Activated CD4-positive, alpha-beta T cell treated with anti-CD3 and anti-CD28 coated beads for 36 hours (primary cell): ENCODE measurements at regions of chr5 and their contacts with region 1.

Region 1: DNA sequence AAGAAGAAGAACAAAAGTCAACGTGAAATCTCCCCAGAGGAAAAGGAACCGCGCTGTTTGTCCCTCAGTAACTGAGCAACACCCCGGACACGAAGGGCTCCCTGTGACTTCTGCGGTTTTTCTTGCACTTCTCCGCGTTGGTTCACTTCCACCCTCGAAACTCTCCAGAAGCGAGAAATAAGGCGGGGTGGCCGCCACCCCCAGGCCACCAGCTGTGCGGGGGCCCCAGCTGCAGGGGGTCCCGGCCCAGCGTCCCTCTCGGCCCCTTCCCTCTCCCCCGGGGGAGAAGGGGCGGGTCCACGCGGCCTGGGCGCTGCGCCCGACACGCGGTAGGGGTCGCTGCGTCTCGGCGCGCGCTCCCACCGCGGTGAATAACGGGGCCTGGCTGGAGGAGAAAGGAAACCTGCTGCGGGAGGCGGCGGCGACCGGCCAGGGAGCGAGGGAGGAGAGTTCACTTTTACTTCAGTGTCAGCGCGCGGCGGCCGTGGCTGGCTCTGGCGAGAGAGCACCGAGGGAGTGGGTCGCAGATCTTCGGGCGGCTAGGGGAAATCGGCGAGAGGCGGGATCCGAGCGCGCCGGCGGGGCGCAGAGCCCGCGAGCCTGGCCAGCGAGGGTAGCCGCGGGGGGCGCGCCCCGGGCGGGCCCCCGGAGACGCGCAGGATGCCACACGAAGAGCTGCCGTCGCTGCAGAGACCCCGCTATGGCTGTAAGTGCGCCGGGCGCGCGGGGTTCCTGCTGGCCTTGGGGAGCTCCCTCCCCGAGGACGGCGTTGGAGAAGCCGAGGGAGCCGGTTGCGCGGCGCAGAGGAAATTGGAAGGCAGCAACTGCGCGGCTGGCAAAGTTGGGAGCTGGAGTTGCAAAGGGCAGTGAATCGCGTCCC is at the start of gene IQGAP2:
- DNase-seq: peak; percentile 88
- ATAC-seq: peak; percentile 62
- H3K4me3 Mint-ChIP-seq: peak within 1 kb of the TSS; percentile 93
- H3K27ac Mint-ChIP-seq: peak within 1 kb of the TSS; percentile 100
- H3K4me1 Mint-ChIP-seq: peaks cover 56% of the 10 kb centered on the region
- H3K27me3 Mint-ChIP-seq: peaks cover 4% of the 10 kb centered on the region
- total RNA-seq, gene IQGAP2: 62.7 to 82.7 TPM

Region 2: GRCh38 chr5:76269932-76270610 is 133.1 kb before region 1 on chr5:
- CTCF ChIA-PET with region 1: no interaction called
- POLR2A ChIA-PET with region 1: interaction called, 3 read pairs
- intact Hi-C with region 1: loop called (anchors 1 to 2 kb)
- DNase-seq: peak; percentile 67
- ATAC-seq: peak; percentile 78
- H3K4me3 Mint-ChIP-seq: peak overlapping the region; percentile 52
- H3K27ac Mint-ChIP-seq: peak overlapping the region; percentile 96
- H3K4me1 Mint-ChIP-seq: peaks cover 40% of the 10 kb centered on the region
- H3K27me3 Mint-ChIP-seq: peaks cover 7% of the 10 kb centered on the region

Region 3: GRCh38 chr5:76367623-76368371 is 35.3 kb before region 1 on chr5:
- CTCF ChIA-PET with region 1: no interaction called
- POLR2A ChIA-PET with region 1: no interaction called
- intact Hi-C with region 1: loop called (anchors 1 kb)
- DNase-seq: peak; percentile 57
- ATAC-seq: peak; percentile 97
- H3K4me3 Mint-ChIP-seq: no peak overlapping the region
- H3K27ac Mint-ChIP-seq: peak overlapping the region; percentile 85
- H3K4me1 Mint-ChIP-seq: peaks cover 32% of the 10 kb centered on the region
- H3K27me3 Mint-ChIP-seq: no peaks in the 10 kb centered on the region

Region 4: GRCh38 chr5:76433261-76433660 is 30.1 kb after region 1 on chr5:
- CTCF ChIA-PET with region 1: no interaction called
- POLR2A ChIA-PET with region 1: no interaction called
- intact Hi-C with region 1: no loop called
- DNase-seq: no peak
- ATAC-seq: no peak
- H3K4me3 Mint-ChIP-seq: no peak overlapping the region
- H3K27ac Mint-ChIP-seq: no peak overlapping the region
- H3K4me1 Mint-ChIP-seq: peaks cover 12% of the 10 kb centered on the region
- H3K27me3 Mint-ChIP-seq: no peaks in the 10 kb centered on the region

Region 5: DNA sequence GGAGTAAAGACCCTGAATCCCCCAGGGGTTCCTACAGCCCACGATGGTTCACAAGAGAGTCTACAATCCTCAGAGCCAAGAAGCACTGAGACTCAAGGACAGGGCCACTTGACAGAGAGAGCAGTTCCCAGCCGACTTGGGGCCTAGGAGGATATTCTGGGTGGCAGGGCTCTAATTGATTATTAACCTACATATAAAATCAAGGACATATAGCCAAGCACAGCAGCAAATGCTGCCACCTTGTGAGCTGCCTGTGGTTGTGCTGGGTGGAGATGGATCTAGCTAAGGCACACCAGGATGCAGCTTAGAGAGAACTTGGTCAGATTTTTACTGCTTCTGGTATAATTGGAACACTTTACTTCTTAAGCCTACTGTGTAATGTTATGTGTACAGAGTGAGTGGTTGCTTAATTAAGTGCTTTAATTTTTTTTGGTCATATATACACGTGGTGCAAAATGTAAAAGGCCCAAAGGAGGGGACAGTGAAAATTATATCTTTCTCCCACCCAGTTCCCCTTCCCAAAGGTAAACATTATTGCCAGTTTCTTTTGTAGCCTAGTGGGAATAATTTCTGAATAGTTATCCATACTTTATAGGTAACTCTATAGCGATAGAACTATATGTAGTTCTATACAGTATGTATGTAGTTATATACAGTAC is 141.3 kb after region 1 on chr5:
- CTCF ChIA-PET with region 1: interaction called, 36 read pairs
- POLR2A ChIA-PET with region 1: interaction called, 29 read pairs
- intact Hi-C with region 1: loop called (anchors 1 kb)
- DNase-seq: peak; percentile 79
- ATAC-seq: peak; percentile 34
- H3K4me3 Mint-ChIP-seq: peak overlapping the region; percentile 73
- H3K27ac Mint-ChIP-seq: peak overlapping the region; percentile 100
- H3K4me1 Mint-ChIP-seq: peaks cover 90% of the 10 kb centered on the region
- H3K27me3 Mint-ChIP-seq: no peaks in the 10 kb centered on the region

Region 6: GRCh38 chr5:76715736-76716455 is 312.8 kb after region 1 on chr5 and contains the start of gene F2R:
- CTCF ChIA-PET with region 1: no interaction called
- POLR2A ChIA-PET with region 1: no interaction called
- intact Hi-C with region 1: loop called in 1 of 2 experiments (anchors 1 kb)
- DNase-seq: peak; percentile 72
- ATAC-seq: peak; percentile 79
- H3K4me3 Mint-ChIP-seq: peak within 1 kb of the TSS; percentile 75
- H3K27ac Mint-ChIP-seq: no peak within 1 kb of the TSS
- H3K4me1 Mint-ChIP-seq: peaks cover 22% of the 10 kb centered on the region
- H3K27me3 Mint-ChIP-seq: peaks cover 38% of the 10 kb centered on the region
- total RNA-seq, gene F2R: 1.4 TPM

Region 7: GRCh38 chr5:77030097-77031071 is 627.3 kb after region 1 on chr5 and contains the start of gene AGGF1:
- CTCF ChIA-PET with region 1: no interaction called
- POLR2A ChIA-PET with region 1: no interaction called
- intact Hi-C with region 1: loop called in 1 of 2 experiments (anchors 5 kb)
- DNase-seq: peak; percentile 96
- ATAC-seq: peak; percentile 98
- H3K4me3 Mint-ChIP-seq: peak within 1 kb of the TSS; percentile 87
- H3K27ac Mint-ChIP-seq: peak within 1 kb of the TSS; percentile 94
- H3K4me1 Mint-ChIP-seq: peaks cover 30% of the 10 kb centered on the region
- H3K27me3 Mint-ChIP-seq: no peaks in the 10 kb centered on the region
- total RNA-seq, gene AGGF1: 25.5 to 33.2 TPM

Region 8: GRCh38 chr5:77076961-77077823 is 674.1 kb after region 1 on chr5:
- CTCF ChIA-PET with region 1: no interaction called
- POLR2A ChIA-PET with region 1: no interaction called
- intact Hi-C with region 1: no loop called
- DNase-seq: peak; percentile 82
- ATAC-seq: peak; percentile 84
- H3K4me3 Mint-ChIP-seq: peak overlapping the region; percentile 31
- H3K27ac Mint-ChIP-seq: no peak overlapping the region
- H3K4me1 Mint-ChIP-seq: peaks cover 11% of the 10 kb centered on the region
- H3K27me3 Mint-ChIP-seq: no peaks in the 10 kb centered on the region